Panc1 (cell line): ENCODE measurements at regions of chr20 and their contacts with region 1.

Region 1: GRCh38 chr20:60210779-60211617 is 252.8 kb downstream of the CDH26 start:
- DNase-seq: peak; percentile 30
- ATAC-seq: peak; percentile 96
- H3K4me3 ChIP-seq: no peak overlapping the region
- H3K27ac ChIP-seq: no peak overlapping the region
- H3K4me1 ChIP-seq: no peaks in the 10 kb centered on the region
- H3K27me3 ChIP-seq: peaks cover 5% of the 10 kb centered on the region
- CTCF ChIP-seq: peak; percentile 95

Region 2: DNA sequence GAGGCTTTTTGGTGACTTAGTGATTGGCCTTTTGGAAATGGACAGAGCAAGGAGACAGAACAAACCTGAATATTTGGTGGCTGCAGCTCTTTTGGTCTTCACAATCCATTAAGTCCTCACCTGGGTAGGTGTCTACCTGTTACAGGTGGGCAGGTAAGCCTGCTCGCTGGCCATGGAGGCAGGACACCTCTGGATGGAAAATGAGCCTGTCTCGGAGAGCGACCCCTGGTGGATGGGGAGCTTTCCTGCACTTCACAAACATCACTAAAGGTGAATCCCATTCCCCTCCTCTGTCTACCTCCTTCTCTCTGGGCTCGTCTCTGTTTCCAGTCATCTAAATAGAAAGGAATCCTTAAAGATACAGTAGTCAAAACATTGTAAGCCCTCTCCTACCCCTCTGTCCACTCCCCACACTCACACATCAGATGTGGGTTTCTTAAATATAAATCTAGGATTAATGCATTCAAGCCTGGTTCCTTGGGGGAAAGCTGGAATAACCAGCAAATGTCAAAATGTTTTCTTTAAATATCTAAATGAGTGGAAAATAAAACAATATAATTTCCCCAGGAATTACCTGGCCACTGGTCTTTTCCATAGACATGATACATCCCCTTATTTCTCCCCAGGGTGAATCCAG is 52.1 kb after region 1 on chr20:
- CTCF ChIA-PET with region 1: no interaction called
- POLR2A ChIA-PET with region 1: no interaction called
- in situ Hi-C with region 1: no loop called
- intact Hi-C with region 1: loop called (anchors 1 kb)
- DNase-seq: peak; percentile 22
- ATAC-seq: no peak
- H3K4me3 ChIP-seq: no peak overlapping the region
- H3K27ac ChIP-seq: no peak overlapping the region
- H3K4me1 ChIP-seq: no peaks in the 10 kb centered on the region
- H3K27me3 ChIP-seq: no peaks in the 10 kb centered on the region; the same call in 1 of the 2 replicates
- CTCF ChIP-seq: peak; percentile 76

Region 3: GRCh38 chr20:61120595-61121515 is 909.9 kb after region 1 on chr20:
- CTCF ChIA-PET with region 1: no interaction called
- POLR2A ChIA-PET with region 1: no interaction called
- in situ Hi-C with region 1: no loop called
- intact Hi-C with region 1: loop called (anchors 5 kb)
- DNase-seq: no peak
- ATAC-seq: peak; percentile 82; the same call in 1 of the 2 replicates
- H3K4me3 ChIP-seq: no peak overlapping the region
- H3K27ac ChIP-seq: no peak overlapping the region
- H3K4me1 ChIP-seq: no peaks in the 10 kb centered on the region
- H3K27me3 ChIP-seq: peaks cover 4% of the 10 kb centered on the region; the same call in 1 of the 2 replicates
- CTCF ChIP-seq: peak; percentile 80